Endothelial cell of umbilical vein (primary cell): ENCODE measurements at regions of chr11 and their contacts with region 1.

Region 1: GRCh38 chr11:73141848-73142286 is 251 bp downstream of the FCHSD2 start:
- DNase-seq: peak; percentile 79
- H3K4me3 ChIP-seq: peak overlapping the region; percentile 56 to 95 (median 90)
- H3K27ac ChIP-seq: peak overlapping the region; percentile 88
- H3K4me1 ChIP-seq: peaks cover 37% of the 10 kb centered on the region
- H3K27me3 ChIP-seq: no peaks in the 10 kb centered on the region
- CTCF ChIP-seq: no peak
- POLR2A ChIP-seq: no peak

Region 2: GRCh38 chr11:72831513-72832300 is 310.2 kb before region 1 on chr11:
- CTCF ChIA-PET with region 1: interaction called, 21 read pairs
- POLR2A ChIA-PET with region 1: no interaction called
- dilution Hi-C with region 1: no loop called
- intact Hi-C with region 1: loop called (anchors 1 kb)
- DNase-seq: peak; percentile 80
- H3K4me3 ChIP-seq: no peak overlapping the region
- H3K27ac ChIP-seq: no peak overlapping the region
- H3K4me1 ChIP-seq: peaks cover 9% of the 10 kb centered on the region
- H3K27me3 ChIP-seq: no peaks in the 10 kb centered on the region
- CTCF ChIP-seq: peak; percentile 91 to 97
- POLR2A ChIP-seq: no peak

Region 3: DNA sequence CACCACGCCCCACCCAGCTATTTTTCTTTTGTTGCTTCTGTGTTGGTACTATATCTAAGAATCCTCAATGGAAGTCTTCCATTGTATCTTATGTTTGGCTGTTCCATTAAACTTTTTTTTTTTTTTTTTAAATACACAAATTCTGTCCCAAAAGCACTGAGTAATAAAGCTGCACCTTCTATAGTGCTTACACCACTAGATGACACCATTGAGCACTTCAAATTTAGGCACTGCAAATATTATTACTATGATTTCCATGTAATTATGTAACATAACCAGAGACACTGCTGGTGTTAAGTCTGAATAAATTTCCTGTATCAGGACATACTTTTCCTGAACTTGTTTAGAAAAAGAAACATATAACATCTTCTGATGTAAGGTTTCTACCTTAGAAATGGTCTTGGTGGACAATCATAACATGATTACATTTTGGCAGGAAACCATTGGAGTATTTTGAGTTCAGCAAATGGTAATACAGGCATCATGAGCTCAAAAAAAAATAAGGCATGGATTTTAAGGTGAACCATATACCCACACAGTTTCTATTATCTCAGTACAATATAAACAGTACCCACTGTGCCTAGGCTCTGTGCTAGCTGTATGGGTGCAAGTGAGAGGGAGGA is 217.2 kb before region 1 on chr11:
- CTCF ChIA-PET with region 1: interaction called, 30 read pairs
- POLR2A ChIA-PET with region 1: interaction called, 4 read pairs
- dilution Hi-C with region 1: no loop called
- intact Hi-C with region 1: loop called (anchors 1 kb)
- DNase-seq: peak; percentile 77
- H3K4me3 ChIP-seq: no peak overlapping the region
- H3K27ac ChIP-seq: no peak overlapping the region
- H3K4me1 ChIP-seq: peaks cover 4% of the 10 kb centered on the region
- H3K27me3 ChIP-seq: no peaks in the 10 kb centered on the region
- CTCF ChIP-seq: peak; percentile 29 to 32
- POLR2A ChIP-seq: no peak

Region 4: GRCh38 chr11:73059915-73060314 is 82.0 kb before region 1 on chr11:
- CTCF ChIA-PET with region 1: no interaction called
- POLR2A ChIA-PET with region 1: no interaction called
- dilution Hi-C with region 1: no loop called
- intact Hi-C with region 1: no loop called
- DNase-seq: no peak
- H3K4me3 ChIP-seq: no peak overlapping the region
- H3K27ac ChIP-seq: no peak overlapping the region
- H3K4me1 ChIP-seq: no peaks in the 10 kb centered on the region
- H3K27me3 ChIP-seq: no peaks in the 10 kb centered on the region
- CTCF ChIP-seq: no peak
- POLR2A ChIP-seq: no peak

Region 5: DNA sequence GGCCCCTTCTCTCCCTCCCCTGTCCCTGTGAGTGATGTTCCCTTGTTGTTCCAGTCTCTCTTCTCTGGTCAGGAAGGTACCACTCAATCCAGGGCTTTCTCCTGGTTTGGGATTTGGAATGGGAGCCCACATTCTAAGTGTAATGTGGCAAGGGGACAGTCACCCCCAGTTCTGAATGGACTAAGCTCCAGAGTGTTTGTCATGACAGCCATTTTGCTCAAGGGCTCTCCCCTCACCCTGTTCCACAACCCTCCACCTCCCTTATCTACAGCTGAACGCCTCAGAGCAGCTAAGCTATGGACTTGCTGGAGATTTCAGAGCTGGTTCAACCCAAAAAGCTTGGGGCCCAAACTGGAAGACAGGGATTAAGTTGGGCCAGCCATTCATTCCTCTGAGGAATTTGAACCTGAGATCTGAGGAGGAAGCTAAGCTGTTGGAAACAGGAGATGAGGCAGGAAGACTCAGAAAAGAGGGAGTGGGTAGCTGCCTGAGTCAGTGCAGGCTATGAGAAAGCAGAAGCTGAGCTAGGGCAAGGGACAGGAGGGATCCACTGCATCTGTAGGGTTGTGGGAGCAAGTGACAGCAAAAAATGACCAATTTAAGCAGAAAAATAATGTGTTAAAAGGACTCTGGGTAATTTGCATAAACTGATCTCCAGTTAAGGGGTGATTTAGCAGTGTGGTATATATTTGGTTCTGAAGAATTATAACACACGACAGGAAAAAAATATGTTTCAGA is 23.1 kb after region 1 on chr11:
- CTCF ChIA-PET with region 1: interaction called, 20 read pairs
- POLR2A ChIA-PET with region 1: interaction called, 3 read pairs
- dilution Hi-C with region 1: no loop called
- intact Hi-C with region 1: no loop called
- DNase-seq: no peak
- H3K4me3 ChIP-seq: no peak overlapping the region
- H3K27ac ChIP-seq: no peak overlapping the region
- H3K4me1 ChIP-seq: peaks cover 11% of the 10 kb centered on the region
- H3K27me3 ChIP-seq: no peaks in the 10 kb centered on the region
- CTCF ChIP-seq: no peak
- POLR2A ChIP-seq: no peak